ENCODE measurements at regions of chr14 and their contacts with region 1.

Region 1: GRCh38 chr14:73728717-73729330 is 14.6 kb upstream of the PNMA1 start:
- DNase-seq: peak; percentile 79 to 97
- H3K4me3 ChIP-seq: no peak overlapping the region
- H3K27ac ChIP-seq: no peak overlapping the region
- H3K4me1 ChIP-seq: peaks cover 0 to 6% (median 3%) of the 10 kb centered on the region in 4 experiments; a peak in 4 of 7 replicates
- H3K27me3 ChIP-seq: no peaks in the 10 kb centered on the region
- CTCF ChIP-seq: peak; percentile 96 to 97 (median 97)
- EP300 ChIP-seq: no peak
- POLR2A ChIP-seq: no peak
- RAD21 ChIP-seq: peak; percentile 96 to 97

Region 2: DNA sequence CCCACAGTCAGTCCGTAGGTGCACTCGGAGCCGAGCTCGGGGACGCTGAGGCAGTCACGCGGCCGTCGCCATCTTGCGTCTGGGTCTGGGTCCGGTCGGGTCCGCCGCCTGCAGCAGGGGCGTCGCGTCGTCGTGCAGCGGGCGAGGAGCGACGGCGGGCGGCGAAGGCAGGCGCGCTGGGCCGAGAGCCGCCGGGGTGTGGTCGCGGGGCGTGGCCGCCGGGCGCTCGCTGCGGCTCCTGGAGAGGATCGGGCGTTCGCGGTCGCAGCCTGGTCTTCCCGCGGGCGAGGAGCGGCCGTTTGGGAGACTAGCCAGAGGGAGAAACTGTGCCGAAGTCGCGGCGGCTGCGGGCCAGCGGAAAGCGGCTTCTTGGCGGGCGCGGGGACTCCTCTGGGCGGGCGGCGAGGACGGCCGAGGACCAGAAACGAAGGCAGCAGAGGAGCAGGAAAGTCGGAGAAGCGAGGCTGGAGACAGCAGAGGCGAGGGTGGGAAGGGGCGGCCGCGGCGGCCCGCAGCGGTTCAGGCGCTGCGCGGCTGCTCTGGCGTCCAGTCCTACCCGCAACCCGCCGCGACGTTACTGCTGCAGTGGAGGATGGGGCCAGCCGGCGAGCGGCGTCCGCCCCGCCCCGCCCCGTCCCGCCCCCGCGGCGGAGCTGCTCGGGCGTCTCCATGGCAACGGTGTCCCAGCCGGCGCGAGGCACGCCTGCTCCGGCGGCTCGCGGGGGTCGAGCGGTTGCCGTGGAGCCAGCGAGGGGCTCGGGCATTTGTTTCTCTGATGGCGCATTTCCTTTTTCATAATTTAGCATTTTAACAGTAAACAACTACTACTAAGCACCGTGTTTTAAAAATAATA is 14.8 kb before region 1 on chr14 and contains the start of gene PNMA1:
- CTCF ChIA-PET with region 1: interaction called, 15 read pairs
- POLR2A ChIA-PET with region 1: interaction called, 15 read pairs
- DNase-seq: peak; percentile 31 to 88
- H3K4me3 ChIP-seq: peak within 1 kb of the TSS; percentile 88 to 98 (median 94)
- H3K27ac ChIP-seq: peak within 1 kb of the TSS; percentile 72
- H3K4me1 ChIP-seq: peaks cover 0 to 23% (median 14%) of the 10 kb centered on the region in 4 experiments; a peak in 6 of 7 replicates
- H3K27me3 ChIP-seq: peaks cover 0 to 6% (median 2%) of the 10 kb centered on the region in 4 experiments; a peak in 3 of 7 replicates
- CTCF ChIP-seq: no peak
- EP300 ChIP-seq: no peak
- POLR2A ChIP-seq: peak; percentile 86 to 92
- RAD21 ChIP-seq: no peak
- total RNA-seq, gene PNMA1: 52.7 and 55.1 TPM in 2 replicates

Region 3: GRCh38 chr14:73741386-73741875 is 12.6 kb after region 1 on chr14:
- CTCF ChIA-PET with region 1: interaction called, 173 read pairs
- POLR2A ChIA-PET with region 1: interaction called, 4 read pairs
- DNase-seq: peak; percentile 47 to 74
- H3K4me3 ChIP-seq: peak overlapping the region in 3 of 4 experiments; percentile 1 to 43 (median 19); a peak in 4 of 8 replicates
- H3K27ac ChIP-seq: peak overlapping the region; percentile 31; the same call in 1 of the 2 replicates
- H3K4me1 ChIP-seq: peaks cover 6 to 41% (median 30%) of the 10 kb centered on the region in 4 experiments
- H3K27me3 ChIP-seq: no peaks in the 10 kb centered on the region
- CTCF ChIP-seq: no peak
- EP300 ChIP-seq: no peak
- POLR2A ChIP-seq: no peak
- RAD21 ChIP-seq: no peak

Region 4: GRCh38 chr14:73771848-73772638 is 43.2 kb after region 1 on chr14:
- CTCF ChIA-PET with region 1: interaction called, 37 read pairs
- POLR2A ChIA-PET with region 1: no interaction called
- DNase-seq: peak; percentile 43 to 71
- H3K4me3 ChIP-seq: peak overlapping the region in 1 of 4 experiments; percentile 4; a peak in 1 of 8 replicates
- H3K27ac ChIP-seq: no peak overlapping the region
- H3K4me1 ChIP-seq: peaks cover 5 to 22% (median 8%) of the 10 kb centered on the region in 4 experiments; a peak in 5 of 7 replicates
- H3K27me3 ChIP-seq: peaks cover 0 to 28% (median 12%) of the 10 kb centered on the region in 4 experiments; a peak in 4 of 7 replicates
- CTCF ChIP-seq: no peak
- EP300 ChIP-seq: no peak; a peak in 1 of 3 replicates
- POLR2A ChIP-seq: no peak
- RAD21 ChIP-seq: no peak

Region 5: DNA sequence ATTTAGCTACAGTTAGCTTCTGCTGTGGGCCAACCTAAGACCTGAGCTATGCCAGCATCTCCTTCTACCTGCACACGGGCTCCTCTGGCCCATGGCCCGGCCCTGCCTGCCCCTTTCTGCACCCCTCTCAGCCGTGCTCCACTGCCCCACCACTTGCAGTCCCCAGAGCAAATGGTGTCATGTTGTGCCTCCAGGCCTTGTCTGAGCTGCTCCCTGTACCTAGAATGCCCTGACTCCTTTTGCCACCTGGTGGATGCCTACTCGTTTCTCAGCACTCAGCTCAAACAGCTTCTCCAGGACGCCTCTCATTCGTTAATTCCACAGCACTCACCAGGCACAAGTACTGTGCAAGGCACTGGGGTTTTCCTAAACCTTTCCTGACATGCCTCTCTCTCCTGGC is 48.6 kb after region 1 on chr14:
- CTCF ChIA-PET with region 1: interaction called, 37 read pairs
- POLR2A ChIA-PET with region 1: no interaction called
- DNase-seq: no peak
- H3K4me3 ChIP-seq: no peak overlapping the region
- H3K27ac ChIP-seq: no peak overlapping the region
- H3K4me1 ChIP-seq: peaks cover 0 to 3% (median 1%) of the 10 kb centered on the region in 4 experiments; a peak in 3 of 7 replicates
- H3K27me3 ChIP-seq: peaks cover 0 to 26% (median 13%) of the 10 kb centered on the region in 4 experiments; a peak in 6 of 7 replicates
- CTCF ChIP-seq: peak; percentile 43 to 65 (median 54)
- EP300 ChIP-seq: no peak
- POLR2A ChIP-seq: no peak
- RAD21 ChIP-seq: peak; percentile 64 to 71

Region 6: DNA sequence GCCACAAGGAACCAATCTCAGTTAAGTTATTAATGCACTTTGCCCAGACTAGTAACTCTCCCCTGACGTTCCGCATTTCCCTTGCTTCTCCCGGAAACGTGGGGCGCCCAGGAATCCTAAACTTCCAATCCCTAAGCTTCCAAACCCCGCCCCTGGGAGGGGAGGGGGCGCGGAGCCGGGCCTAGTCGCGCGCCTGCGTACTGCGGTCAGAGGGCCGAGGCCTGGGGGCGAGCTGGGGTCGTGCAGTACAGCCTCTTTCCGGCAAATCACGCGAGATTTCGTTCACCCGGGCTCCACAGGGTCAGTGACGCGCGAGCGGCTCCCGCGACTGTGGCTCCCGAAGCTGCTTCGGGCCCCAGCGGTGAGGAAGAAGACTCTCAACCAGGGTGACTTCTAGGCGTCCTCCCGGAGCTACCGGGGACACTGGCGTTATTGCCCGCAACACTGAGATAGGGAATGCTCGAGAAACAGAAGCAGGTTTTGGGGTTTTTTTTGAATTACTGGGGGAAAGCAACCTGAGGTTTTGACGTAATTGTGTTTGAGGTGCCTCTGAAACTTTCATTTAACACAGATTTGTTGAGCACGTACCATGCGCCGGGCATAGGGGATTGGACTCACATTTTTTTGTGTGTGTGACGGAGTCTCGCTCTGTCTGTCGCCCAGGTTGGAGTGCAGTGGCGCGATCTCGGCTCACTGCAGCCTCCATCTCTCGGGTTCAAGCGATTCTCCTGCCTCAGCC is 123.0 kb after region 1 on chr14 and contains the start of gene PTGR2:
- CTCF ChIA-PET with region 1: interaction called, 10 read pairs
- POLR2A ChIA-PET with region 1: interaction called, 4 read pairs
- DNase-seq: peak; percentile 91 to 98
- H3K4me3 ChIP-seq: peak within 1 kb of the TSS; percentile 77 to 94 (median 90)
- H3K27ac ChIP-seq: peak within 1 kb of the TSS; percentile 88
- H3K4me1 ChIP-seq: peaks cover 0 to 6% (median 4%) of the 10 kb centered on the region in 4 experiments; a peak in 3 of 7 replicates
- H3K27me3 ChIP-seq: no peaks in the 10 kb centered on the region
- CTCF ChIP-seq: peak in 2 of 3 experiments; percentile 0 to 11; a peak in 1 of 4 replicates
- EP300 ChIP-seq: no peak
- POLR2A ChIP-seq: peak; percentile 68 to 90
- RAD21 ChIP-seq: no peak
- total RNA-seq, gene PTGR2: 14.0 and 17.5 TPM in 2 replicates

Region 7: DNA sequence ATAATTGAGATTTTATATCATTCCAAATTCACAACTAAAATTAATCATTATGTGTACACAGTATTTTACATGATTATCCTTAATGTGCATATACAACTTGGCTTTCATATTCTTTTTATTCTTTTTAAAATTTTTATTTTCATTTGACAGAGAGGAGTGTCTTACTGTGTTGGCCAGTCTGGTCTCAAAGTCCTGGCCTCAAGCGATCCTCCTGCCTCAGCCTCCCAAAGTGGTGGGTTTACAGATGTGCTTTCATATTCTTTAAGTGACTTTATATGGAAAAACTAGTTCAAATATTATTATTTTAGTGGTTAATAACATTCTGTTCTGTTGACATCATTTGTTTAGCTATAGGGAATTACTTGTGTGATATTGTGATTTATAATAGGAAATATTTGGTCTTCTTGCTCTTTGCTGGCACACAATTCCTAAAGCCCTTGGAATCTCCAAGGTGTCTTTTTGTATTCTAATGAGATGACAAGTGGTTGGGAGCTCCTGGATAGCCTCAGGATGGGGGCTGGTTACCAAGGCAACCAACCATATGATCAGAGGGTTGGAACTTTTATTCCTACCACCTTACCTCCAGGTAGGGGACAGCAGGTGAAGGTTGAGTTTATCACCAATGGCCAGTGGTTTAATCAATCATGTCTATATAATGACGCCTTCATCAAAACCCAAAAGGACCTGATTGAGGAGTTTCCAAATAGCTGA is 141.9 kb after region 1 on chr14:
- CTCF ChIA-PET with region 1: interaction called, 27 read pairs
- POLR2A ChIA-PET with region 1: no interaction called
- DNase-seq: no peak
- H3K4me3 ChIP-seq: no peak overlapping the region
- H3K27ac ChIP-seq: no peak overlapping the region
- H3K4me1 ChIP-seq: no peaks in the 10 kb centered on the region
- H3K27me3 ChIP-seq: no peaks in the 10 kb centered on the region
- CTCF ChIP-seq: no peak
- EP300 ChIP-seq: no peak
- POLR2A ChIP-seq: no peak
- RAD21 ChIP-seq: no peak